Naive thymus-derived CD4-positive, alpha-beta T cell (primary cell): ENCODE measurements at regions of chr20 and their contacts with region 1.

Region 1: DNA sequence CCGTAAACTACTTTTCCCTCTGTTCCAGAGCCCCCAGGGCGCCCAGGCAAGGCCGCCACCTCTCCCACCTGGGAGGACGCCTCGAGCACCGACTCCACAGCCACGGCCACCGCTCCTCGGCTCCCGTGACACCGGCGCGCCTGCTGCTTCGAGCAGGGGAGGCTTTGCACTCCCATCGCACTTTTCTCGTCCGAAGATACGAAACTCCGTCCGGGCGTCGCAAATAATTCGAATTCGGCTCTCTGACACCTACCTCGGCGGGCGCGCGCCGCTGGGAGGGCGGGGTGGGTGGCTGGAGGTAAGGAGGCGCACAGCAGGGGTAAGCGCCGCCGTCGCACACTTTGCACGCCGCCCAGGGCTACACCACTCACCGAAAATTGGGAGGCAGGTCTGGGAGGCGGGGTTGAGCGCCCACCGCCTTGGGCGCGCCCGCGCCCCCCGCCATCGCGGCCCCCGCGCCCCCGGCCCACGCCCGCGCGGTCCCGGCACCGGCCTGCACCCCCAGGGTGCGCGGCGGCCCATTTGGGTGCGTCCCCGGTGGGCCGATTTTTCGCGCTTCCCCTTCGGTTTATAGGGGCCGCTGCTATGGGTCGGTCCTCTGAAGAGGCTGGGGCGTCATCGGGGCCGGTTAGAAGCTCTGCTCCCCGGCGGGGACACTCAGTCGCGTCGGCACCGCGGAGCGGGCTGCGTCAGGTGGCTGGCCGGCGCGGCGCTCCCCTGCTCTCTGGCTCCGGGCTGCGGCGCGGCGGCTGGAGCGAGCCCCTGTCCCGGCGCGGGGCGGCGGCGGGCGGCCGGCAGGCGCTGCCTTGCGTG is 36.2 kb downstream of the GNAS start:
- DNase-seq: peak; percentile 64 to 91 (median 86)
- ATAC-seq: peak; percentile 76
- H3K4me3 ChIP-seq: peak overlapping the region; percentile 68
- H3K4me3 Mint-ChIP-seq: peak overlapping the region; percentile 81 to 94 (median 87)
- H3K27ac ChIP-seq: peak overlapping the region; percentile 95
- H3K27ac Mint-ChIP-seq: peak overlapping the region; percentile 67 to 97 (median 90)
- H3K4me1 ChIP-seq: peaks cover 4 to 6% of the 10 kb centered on the region in 2 donors
- H3K4me1 Mint-ChIP-seq: peaks cover 15 to 46% (median 37%) of the 10 kb centered on the region in 7 donors
- H3K27me3 ChIP-seq: no peaks in the 10 kb centered on the region
- H3K27me3 Mint-ChIP-seq: peaks cover 0 to 3% (median 0%) of the 10 kb centered on the region in 5 donors

Region 2: GRCh38 chr20:58850693-58851174 is 38.0 kb before region 1 on chr20 and contains the start of gene GNAS-AS1:
- CTCF ChIA-PET with region 1: no interaction called
- POLR2A ChIA-PET with region 1: interaction called, 6 read pairs
- intact Hi-C with region 1: loop called in 1 of 2 experiments (anchors 1 kb)
- DNase-seq: peak; percentile 57 to 81 (median 78)
- ATAC-seq: peak; percentile 87
- H3K4me3 ChIP-seq: peak within 1 kb of the TSS; percentile 61
- H3K4me3 Mint-ChIP-seq: peak within 1 kb of the TSS; percentile 83 to 95 (median 92)
- H3K27ac ChIP-seq: no peak within 1 kb of the TSS
- H3K27ac Mint-ChIP-seq: peak within 1 kb of the TSS in 4 of 9 donors; percentile 19 to 81 (median 54)
- H3K4me1 ChIP-seq: no peaks in the 10 kb centered on the region
- H3K4me1 Mint-ChIP-seq: peaks cover 11 to 36% (median 30%) of the 10 kb centered on the region in 7 donors
- H3K27me3 ChIP-seq: peaks cover 0 to 10% of the 10 kb centered on the region in 2 donors
- H3K27me3 Mint-ChIP-seq: peaks cover 21 to 67% (median 27%) of the 10 kb centered on the region in 5 donors
- total RNA-seq, gene GNAS-AS1: 0.13 to 2.0 (median 1.5) TPM

Region 3: GRCh38 chr20:58907399-58908137 is 18.8 kb after region 1 on chr20:
- CTCF ChIA-PET with region 1: no interaction called
- POLR2A ChIA-PET with region 1: interaction called, 5 read pairs
- intact Hi-C with region 1: loop called (anchors 1 kb)
- DNase-seq: peak; percentile 17 to 67 (median 40)
- ATAC-seq: peak; percentile 80
- H3K4me3 ChIP-seq: peak overlapping the region; percentile 8
- H3K4me3 Mint-ChIP-seq: peak overlapping the region in 9 of 10 donors; percentile 54 to 85 (median 76)
- H3K27ac ChIP-seq: peak overlapping the region; percentile 54
- H3K27ac Mint-ChIP-seq: peak overlapping the region; percentile 79 to 95 (median 87)
- H3K4me1 ChIP-seq: peaks cover 17 to 20% of the 10 kb centered on the region in 2 donors
- H3K4me1 Mint-ChIP-seq: peaks cover 29 to 71% (median 46%) of the 10 kb centered on the region in 7 donors
- H3K27me3 ChIP-seq: no peaks in the 10 kb centered on the region
- H3K27me3 Mint-ChIP-seq: no peaks in the 10 kb centered on the region

Region 4: GRCh38 chr20:59042796-59043660 is 154.3 kb after region 1 on chr20:
- CTCF ChIA-PET with region 1: no interaction called
- POLR2A ChIA-PET with region 1: interaction called, 9 read pairs
- intact Hi-C with region 1: loop called in 1 of 2 experiments (anchors 1 kb)
- DNase-seq: peak; percentile 90 to 98 (median 94)
- ATAC-seq: peak; percentile 98
- H3K4me3 ChIP-seq: peak overlapping the region; percentile 76
- H3K4me3 Mint-ChIP-seq: peak overlapping the region; percentile 81 to 96 (median 90)
- H3K27ac ChIP-seq: peak overlapping the region; percentile 93
- H3K27ac Mint-ChIP-seq: peak overlapping the region; percentile 76 to 96 (median 91)
- H3K4me1 ChIP-seq: peaks cover 30 to 32% of the 10 kb centered on the region in 2 donors
- H3K4me1 Mint-ChIP-seq: peaks cover 35 to 54% (median 50%) of the 10 kb centered on the region in 7 donors
- H3K27me3 ChIP-seq: no peaks in the 10 kb centered on the region
- H3K27me3 Mint-ChIP-seq: no peaks in the 10 kb centered on the region